ENCODE measurements at regions of chr10 and their contacts with region 1.

Region 1: GRCh38 chr10:85635650-85636049 is 730.9 kb downstream of the GRID1 start:
- DNase-seq: no peak
- H3K4me3 ChIP-seq: no peak overlapping the region
- H3K27ac ChIP-seq: no peak overlapping the region
- H3K4me1 ChIP-seq: no peaks in the 10 kb centered on the region
- H3K27me3 ChIP-seq: no peaks in the 10 kb centered on the region
- CTCF ChIP-seq: no peak
- POLR2A ChIP-seq: no peak

Region 2: DNA sequence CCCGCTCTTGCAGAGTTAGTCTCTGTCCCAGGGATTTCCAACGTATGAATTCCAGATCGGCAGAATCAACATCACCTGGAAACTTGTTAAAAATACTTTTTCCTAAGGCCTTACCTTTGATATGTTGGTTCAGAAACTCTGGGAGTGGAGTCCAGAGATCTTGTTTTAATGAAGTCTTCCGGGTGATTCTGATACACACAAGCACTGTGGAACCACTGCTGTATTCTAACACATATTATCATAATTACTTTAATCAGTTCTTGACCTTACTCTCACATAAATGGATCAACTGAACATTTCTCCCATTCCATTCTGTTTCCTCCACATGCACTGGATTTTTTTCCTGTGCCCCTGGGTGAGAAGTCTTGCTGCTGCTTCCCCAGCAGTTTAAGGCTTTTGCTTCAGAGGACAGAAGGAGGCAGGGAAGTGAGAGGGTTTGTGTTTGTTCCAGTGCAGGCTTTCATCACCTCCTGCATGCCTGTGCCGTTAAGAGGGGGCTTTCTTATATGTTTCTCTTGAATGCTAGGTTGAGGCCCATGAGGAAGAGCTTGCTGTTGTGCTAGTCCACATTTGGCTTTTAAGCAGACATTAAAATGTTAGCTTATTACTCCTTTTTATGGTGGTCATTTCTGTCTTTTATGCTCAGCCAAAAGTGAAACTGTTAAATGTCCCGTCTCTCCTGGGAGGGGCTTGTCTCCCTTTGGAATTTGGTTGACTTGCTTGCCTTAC is 1274.8 kb before region 1 on chr10:
- intact Hi-C with region 1: loop called (anchors 10 kb)
- DNase-seq: no peak
- H3K4me3 ChIP-seq: peak overlapping the region; percentile 4 to 10
- H3K27ac ChIP-seq: peak overlapping the region; percentile 51 to 59
- H3K4me1 ChIP-seq: peaks cover 6% of the 10 kb centered on the region
- H3K27me3 ChIP-seq: no peaks in the 10 kb centered on the region
- CTCF ChIP-seq: no peak
- POLR2A ChIP-seq: no peak